ENCODE measurements at regions of chr1 and their contacts with region 1.

Region 1: GRCh38 chr1:6052543-6053205 is 7.0 kb downstream of the KCNAB2 start:
- DNase-seq: peak; percentile 82
- ATAC-seq: peak; percentile 81
- H3K4me3 Mint-ChIP-seq: peak overlapping the region; percentile 48
- H3K27ac Mint-ChIP-seq: no peak overlapping the region; the same call in 1 of the 2 replicates
- H3K4me1 Mint-ChIP-seq: peaks cover 11% of the 10 kb centered on the region
- H3K27me3 Mint-ChIP-seq: no peaks in the 10 kb centered on the region
- CTCF ChIP-seq: peak; percentile 40

Region 2: GRCh38 chr1:5992026-5992813 is 60.5 kb before region 1 on chr1 and contains the start of gene NPHP4:
- CTCF ChIA-PET with region 1: interaction called, 17 read pairs
- POLR2A ChIA-PET with region 1: no interaction called
- DNase-seq: peak; percentile 100
- ATAC-seq: peak; percentile 91
- H3K4me3 Mint-ChIP-seq: peak within 1 kb of the TSS; percentile 90
- H3K27ac Mint-ChIP-seq: no peak within 1 kb of the TSS; the same call in 1 of the 2 replicates
- H3K4me1 Mint-ChIP-seq: peaks cover 22% of the 10 kb centered on the region
- H3K27me3 Mint-ChIP-seq: peaks cover 35% of the 10 kb centered on the region
- CTCF ChIP-seq: no peak
- total RNA-seq, gene NPHP4: 10.6 to 16.8 TPM (median 12.0 TPM) in 3 replicates

Region 3: GRCh38 chr1:6033986-6034749 is 18.5 kb before region 1 on chr1:
- CTCF ChIA-PET with region 1: interaction called, 37 read pairs
- POLR2A ChIA-PET with region 1: no interaction called
- DNase-seq: peak; percentile 86
- ATAC-seq: peak; percentile 91
- H3K4me3 Mint-ChIP-seq: peak overlapping the region; percentile 44
- H3K27ac Mint-ChIP-seq: no peak overlapping the region
- H3K4me1 Mint-ChIP-seq: peaks cover 17% of the 10 kb centered on the region
- H3K27me3 Mint-ChIP-seq: peaks cover 5% of the 10 kb centered on the region
- CTCF ChIP-seq: peak; percentile 95

Region 4: DNA sequence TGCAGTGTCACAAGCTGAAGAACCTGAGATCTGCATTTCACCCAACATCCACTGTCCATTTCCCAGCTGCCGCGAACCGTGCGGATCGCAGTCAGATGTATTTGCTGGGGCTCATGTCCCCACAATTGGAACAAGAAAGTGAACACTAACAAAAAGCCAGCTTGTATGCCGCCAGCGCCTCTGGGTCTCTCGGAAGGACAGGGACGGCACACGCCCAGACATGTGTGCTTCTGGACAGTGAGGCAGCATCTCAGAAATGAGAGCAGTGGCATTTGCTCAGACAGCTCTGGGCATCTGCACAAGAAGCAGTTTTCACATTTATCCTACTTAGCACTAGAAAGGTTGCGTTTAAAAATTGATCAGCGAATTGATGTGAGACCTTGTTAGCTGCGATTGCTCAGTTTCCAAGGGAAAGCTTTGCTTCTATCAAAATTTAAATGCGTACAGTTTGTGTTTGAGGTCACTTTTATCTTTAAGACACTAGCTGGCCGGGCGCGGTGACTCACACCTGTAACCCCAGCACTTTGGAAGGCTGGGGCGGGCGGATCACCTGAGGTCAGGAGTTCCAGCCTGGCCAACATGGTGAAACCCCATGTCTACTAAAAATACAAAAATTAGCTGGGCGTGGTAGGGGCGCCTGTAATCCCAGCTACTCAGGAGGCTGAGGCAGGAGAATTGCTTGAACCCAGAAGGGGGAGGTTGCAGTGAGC is 21.7 kb after region 1 on chr1:
- CTCF ChIA-PET with region 1: interaction called, 10 read pairs
- POLR2A ChIA-PET with region 1: no interaction called
- DNase-seq: no peak
- ATAC-seq: no peak
- H3K4me3 Mint-ChIP-seq: no peak overlapping the region
- H3K27ac Mint-ChIP-seq: peak overlapping the region; percentile 82
- H3K4me1 Mint-ChIP-seq: 0 out of 2 replicates have a peak, but pooled peaks cover 3% of the 10 kb centered on the region
- H3K27me3 Mint-ChIP-seq: no peaks in the 10 kb centered on the region
- CTCF ChIP-seq: no peak

Region 5: DNA sequence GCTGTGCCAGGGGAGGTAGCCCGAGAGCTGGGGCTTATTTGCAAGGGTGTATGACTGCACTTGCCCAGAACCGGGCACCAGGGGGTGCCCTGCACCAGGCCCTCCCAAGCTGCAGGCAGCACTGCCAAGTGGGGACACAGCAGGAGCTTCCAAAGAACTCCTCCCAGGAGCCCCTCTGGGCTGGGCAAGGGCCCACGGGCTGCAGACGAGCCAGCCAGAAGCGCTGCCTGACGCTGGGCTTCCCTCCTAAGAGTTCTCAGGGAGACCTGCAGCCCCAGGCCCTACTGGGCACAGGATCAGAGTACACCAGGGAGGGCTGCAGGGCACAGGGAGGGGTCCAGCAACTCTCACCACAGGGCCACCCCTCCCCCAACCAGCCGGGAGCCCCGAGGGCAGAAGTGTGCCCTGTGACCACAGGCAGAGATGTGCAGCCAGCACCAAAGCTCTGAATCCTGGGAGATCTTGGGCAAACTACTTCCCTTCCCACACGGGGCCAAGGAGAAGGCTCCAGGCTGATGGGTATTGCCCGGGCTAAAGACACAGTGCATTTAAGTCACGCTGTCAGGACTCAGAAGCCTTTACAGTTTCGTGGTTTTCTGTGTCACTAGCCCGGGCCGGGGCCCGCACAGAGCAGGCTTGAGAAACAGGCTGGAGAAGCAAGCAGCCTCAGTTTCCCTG is 56.4 kb after region 1 on chr1:
- CTCF ChIA-PET with region 1: interaction called, 12 read pairs
- POLR2A ChIA-PET with region 1: no interaction called
- DNase-seq: peak; percentile 62
- ATAC-seq: peak; percentile 73
- H3K4me3 Mint-ChIP-seq: no peak overlapping the region
- H3K27ac Mint-ChIP-seq: no peak overlapping the region
- H3K4me1 Mint-ChIP-seq: no peaks in the 10 kb centered on the region
- H3K27me3 Mint-ChIP-seq: no peaks in the 10 kb centered on the region
- CTCF ChIP-seq: peak; percentile 31; the same call in 1 of the 2 replicates

Region 6: GRCh38 chr1:6162773-6163172 is 110.1 kb after region 1 on chr1:
- CTCF ChIA-PET with region 1: interaction called, 14 read pairs
- POLR2A ChIA-PET with region 1: no interaction called
- DNase-seq: peak; percentile 67
- ATAC-seq: peak; percentile 76
- H3K4me3 Mint-ChIP-seq: no peak overlapping the region
- H3K27ac Mint-ChIP-seq: no peak overlapping the region
- H3K4me1 Mint-ChIP-seq: peaks cover 6% of the 10 kb centered on the region
- H3K27me3 Mint-ChIP-seq: no peaks in the 10 kb centered on the region
- CTCF ChIP-seq: no peak

Region 7: GRCh38 chr1:6185635-6186382 is 133.1 kb after region 1 on chr1:
- CTCF ChIA-PET with region 1: interaction called, 14 read pairs
- POLR2A ChIA-PET with region 1: no interaction called
- DNase-seq: peak; percentile 62
- ATAC-seq: no peak
- H3K4me3 Mint-ChIP-seq: no peak overlapping the region
- H3K27ac Mint-ChIP-seq: peak overlapping the region; percentile 42
- H3K4me1 Mint-ChIP-seq: peaks cover 52% of the 10 kb centered on the region
- H3K27me3 Mint-ChIP-seq: peaks cover 23% of the 10 kb centered on the region
- CTCF ChIP-seq: peak; percentile 43; the same call in 1 of the 2 replicates